ENCODE measurements at regions of chr1 and their contacts with region 1.

Region 1: DNA sequence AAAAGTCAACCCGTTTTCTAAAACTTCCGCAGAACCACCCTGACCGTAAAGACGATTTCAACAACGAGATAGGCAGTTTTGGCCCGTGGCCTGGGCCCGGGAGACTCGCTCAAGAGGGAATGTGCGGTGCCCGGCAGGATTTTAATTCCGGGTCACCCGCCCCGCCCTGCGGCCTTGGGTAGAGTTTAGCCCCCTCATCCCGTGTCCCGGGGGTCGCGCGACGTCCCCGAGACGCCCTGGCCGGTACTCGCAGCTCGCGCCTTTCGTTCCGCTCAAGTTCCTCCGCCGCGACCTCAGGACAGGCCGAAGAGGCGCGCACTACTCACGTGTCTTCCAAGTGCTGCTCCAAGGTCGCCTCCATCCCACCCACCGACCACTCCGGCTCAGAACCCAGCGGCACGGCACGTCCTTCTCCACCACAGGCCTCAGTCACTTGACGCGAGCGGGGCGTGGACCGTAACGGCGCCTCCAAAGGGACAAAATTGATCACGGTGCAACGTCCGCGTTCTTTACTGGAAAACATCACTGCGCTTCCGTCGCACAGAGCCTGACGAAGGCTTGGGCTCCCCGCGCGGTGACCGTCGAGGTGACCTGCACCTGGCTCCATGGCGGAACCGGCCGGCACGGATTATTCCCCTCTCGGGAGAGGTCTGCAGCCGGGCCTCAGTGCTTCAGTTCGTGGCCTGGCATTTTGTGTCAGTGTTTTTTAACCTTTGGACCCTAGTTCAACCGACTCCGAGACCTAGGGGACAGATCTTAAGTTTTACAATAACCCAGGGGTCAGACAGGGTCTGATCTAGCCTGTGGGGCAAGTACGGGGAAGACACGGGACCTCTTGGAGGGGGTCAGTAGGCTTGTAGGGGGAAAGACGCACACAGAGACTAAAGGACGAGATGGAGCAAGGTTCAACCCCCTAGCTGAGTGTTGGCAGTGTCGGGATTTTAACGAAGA is at the start of gene LAMTOR5:
- DNase-seq: peak; percentile 97
- ATAC-seq: peak; percentile 96
- total RNA-seq, gene LAMTOR5: 261 TPM

Region 2: GRCh38 chr1:110338886-110339406 is 68.6 kb before region 1 on chr1 and contains the start of gene RBM15:
- intact Hi-C with region 1: loop called (anchors 1 kb)
- DNase-seq: peak; percentile 99
- ATAC-seq: peak; percentile 90
- total RNA-seq, gene RBM15: 14.7 TPM